ENCODE measurements at regions of chr20 and their contacts with region 1.

Region 1: DNA sequence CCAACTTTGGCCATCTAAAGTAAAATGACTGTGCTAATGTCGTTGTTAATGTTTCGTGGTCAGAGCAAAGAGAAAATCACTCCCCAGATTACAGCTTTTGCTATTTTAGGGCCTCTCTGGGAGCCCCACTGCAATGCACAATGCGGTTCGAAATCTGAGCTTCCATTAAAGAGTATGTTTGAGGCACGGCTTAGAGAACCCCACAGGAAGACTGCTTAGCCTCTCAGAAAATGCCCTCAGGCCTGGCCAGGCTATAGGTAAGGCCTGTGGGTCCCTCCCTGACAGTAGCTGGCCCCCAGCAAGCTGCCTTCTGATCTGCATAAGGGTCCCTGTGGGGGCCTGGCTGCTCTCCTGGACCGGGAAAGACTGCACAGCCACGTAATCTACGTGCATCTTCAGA is 274.6 kb downstream of the PTPRT start:
- DNase-seq: no peak
- ATAC-seq: no peak
- H3K4me3 ChIP-seq: no peak overlapping the region
- H3K4me3 Mint-ChIP-seq: no peak overlapping the region
- H3K27ac ChIP-seq: no peak overlapping the region
- H3K27ac Mint-ChIP-seq: no peak overlapping the region
- H3K4me1 ChIP-seq: no peaks in the 10 kb centered on the region
- H3K4me1 Mint-ChIP-seq: no peaks in the 10 kb centered on the region
- H3K27me3 ChIP-seq: no peaks in the 10 kb centered on the region
- H3K27me3 Mint-ChIP-seq: no peaks in the 10 kb centered on the region

Region 2: GRCh38 chr20:42875581-42875980 is 39.5 kb before region 1 on chr20:
- CTCF ChIA-PET with region 1: no interaction called
- POLR2A ChIA-PET with region 1: interaction called in 1 of 2 experiments, 14 read pairs
- DNase-seq: no peak
- ATAC-seq: no peak
- H3K4me3 ChIP-seq: no peak overlapping the region
- H3K4me3 Mint-ChIP-seq: no peak overlapping the region
- H3K27ac ChIP-seq: no peak overlapping the region
- H3K27ac Mint-ChIP-seq: no peak overlapping the region
- H3K4me1 ChIP-seq: no peaks in the 10 kb centered on the region
- H3K4me1 Mint-ChIP-seq: no peaks in the 10 kb centered on the region
- H3K27me3 ChIP-seq: no peaks in the 10 kb centered on the region
- H3K27me3 Mint-ChIP-seq: peaks cover 0 to 3% of the 10 kb centered on the region in 2 donors

Measured in T-cell (primary cell).